Pancreas (tissue), 10 donors: ENCODE measurements at regions of chr12 and their contacts with region 1.

Region 1: GRCh38 chr12:51424662-51425438 is at the start of gene SLC4A8:
- DNase-seq: peak; percentile 56 to 89 (median 69)
- ATAC-seq: peak; percentile 74 to 87 (median 86)
- H3K4me3 ChIP-seq: peak within 1 kb of the TSS; percentile 7 to 48 (median 24)
- H3K27ac ChIP-seq: no peak within 1 kb of the TSS
- H3K4me1 ChIP-seq: peaks cover 0 to 16% (median 3%) of the 10 kb centered on the region in 3 donors
- H3K27me3 ChIP-seq: no peaks in the 10 kb centered on the region
- CTCF ChIP-seq: peak; percentile 23 to 68 (median 50)
- total RNA-seq, gene SLC4A8: 1.0 to 3.1 (median 2.7) TPM

Region 2: DNA sequence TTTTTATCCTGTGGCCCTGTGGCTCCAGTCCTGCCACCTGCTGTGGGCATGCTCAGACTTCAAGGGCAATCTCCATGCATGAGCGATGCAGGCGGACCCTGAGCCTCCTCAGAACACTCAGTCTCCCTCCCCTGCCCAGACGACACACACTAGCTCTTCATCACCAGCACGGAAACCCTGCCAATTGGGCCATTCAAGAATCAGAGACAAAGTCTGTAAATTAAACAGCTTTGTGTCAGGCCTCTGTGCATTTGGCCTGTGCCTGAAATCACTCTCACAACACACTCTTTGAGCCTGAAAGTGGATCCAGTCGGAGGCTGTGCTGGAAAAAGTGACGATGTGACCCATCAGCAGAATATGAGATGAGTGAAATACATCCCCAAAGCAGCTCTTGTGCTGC is 219.5 kb before region 1 on chr12:
- intact Hi-C with region 1: no loop called
- DNase-seq: no peak
- ATAC-seq: no peak
- H3K4me3 ChIP-seq: no peak overlapping the region
- H3K27ac ChIP-seq: no peak overlapping the region
- H3K4me1 ChIP-seq: no peaks in the 10 kb centered on the region
- H3K27me3 ChIP-seq: no peaks in the 10 kb centered on the region
- CTCF ChIP-seq: no peak

Region 3: GRCh38 chr12:51326762-51327439 is 97.9 kb before region 1 on chr12:
- intact Hi-C with region 1: no loop called
- DNase-seq: peak in 1 of 6 donors; percentile 37
- ATAC-seq: peak in 3 of 4 donors; percentile 26 to 83 (median 80)
- H3K4me3 ChIP-seq: no peak overlapping the region
- H3K27ac ChIP-seq: peak overlapping the region in 1 of 4 donors; percentile 3
- H3K4me1 ChIP-seq: no peaks in the 10 kb centered on the region
- H3K27me3 ChIP-seq: no peaks in the 10 kb centered on the region
- CTCF ChIP-seq: no peak

Region 4: GRCh38 chr12:51521554-51522276 is 96.9 kb after region 1 on chr12:
- intact Hi-C with region 1: loop called in 2 of 3 experiments (anchors 10 kb)
- DNase-seq: no peak
- ATAC-seq: no peak
- H3K4me3 ChIP-seq: no peak overlapping the region
- H3K27ac ChIP-seq: no peak overlapping the region
- H3K4me1 ChIP-seq: no peaks in the 10 kb centered on the region
- H3K27me3 ChIP-seq: no peaks in the 10 kb centered on the region
- CTCF ChIP-seq: no peak

Region 5: DNA sequence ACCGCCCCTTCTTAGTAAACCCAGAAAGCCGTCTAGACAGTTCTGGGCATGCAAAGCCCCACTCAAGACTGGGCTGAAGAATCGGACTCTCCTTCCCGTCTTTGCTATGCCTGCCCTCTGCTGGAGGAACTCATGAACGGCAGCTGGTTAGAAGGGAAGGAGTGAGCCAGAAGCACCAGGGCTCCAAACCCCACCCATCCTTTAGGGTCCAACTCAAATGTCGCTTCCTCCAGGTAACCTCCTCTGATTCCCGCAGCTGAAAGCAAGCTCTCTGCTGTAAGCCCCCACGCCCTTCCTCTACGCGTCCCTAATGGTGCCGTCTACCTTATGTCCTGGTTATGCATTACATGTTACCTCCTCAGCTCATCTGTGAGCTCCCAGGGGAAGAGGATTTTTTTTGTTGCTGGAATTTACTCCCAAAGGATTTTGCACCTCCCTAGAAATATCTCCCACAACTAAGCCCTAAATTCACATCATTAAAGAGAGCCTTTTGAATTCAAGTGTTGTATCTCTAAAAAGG is 107.2 kb after region 1 on chr12:
- intact Hi-C with region 1: loop called (anchors 5 to 10 kb)
- DNase-seq: peak; percentile 48 to 85 (median 73)
- ATAC-seq: peak; percentile 88 to 99 (median 98)
- H3K4me3 ChIP-seq: no peak overlapping the region
- H3K27ac ChIP-seq: no peak overlapping the region
- H3K4me1 ChIP-seq: peaks cover 0 to 3% (median 0%) of the 10 kb centered on the region in 3 donors
- H3K27me3 ChIP-seq: peaks cover 0 to 4% (median 2%) of the 10 kb centered on the region in 4 donors
- CTCF ChIP-seq: peak; percentile 78 to 85 (median 80)

Region 6: GRCh38 chr12:51721282-51721940 is 296.6 kb after region 1 on chr12:
- intact Hi-C with region 1: no loop called
- DNase-seq: peak in 3 of 6 donors; percentile 15 to 63 (median 48)
- ATAC-seq: peak in 1 of 4 donors; percentile 32
- H3K4me3 ChIP-seq: no peak overlapping the region
- H3K27ac ChIP-seq: no peak overlapping the region
- H3K4me1 ChIP-seq: no peaks in the 10 kb centered on the region
- H3K27me3 ChIP-seq: no peaks in the 10 kb centered on the region
- CTCF ChIP-seq: no peak

Region 7: GRCh38 chr12:51823875-51824565 is 399.2 kb after region 1 on chr12:
- intact Hi-C with region 1: loop called in 1 of 3 experiments (anchors 10 kb)
- DNase-seq: peak in 4 of 6 donors; percentile 52 to 66 (median 56)
- ATAC-seq: peak; percentile 66 to 78 (median 74)
- H3K4me3 ChIP-seq: no peak overlapping the region
- H3K27ac ChIP-seq: peak overlapping the region in 1 of 4 donors; percentile 30
- H3K4me1 ChIP-seq: no peaks in the 10 kb centered on the region
- H3K27me3 ChIP-seq: no peaks in the 10 kb centered on the region
- CTCF ChIP-seq: peak in 3 of 4 donors; percentile 22 to 50 (median 44)